A673 (cell line): ENCODE measurements at regions of chr13 and their contacts with region 1.

Region 1: DNA sequence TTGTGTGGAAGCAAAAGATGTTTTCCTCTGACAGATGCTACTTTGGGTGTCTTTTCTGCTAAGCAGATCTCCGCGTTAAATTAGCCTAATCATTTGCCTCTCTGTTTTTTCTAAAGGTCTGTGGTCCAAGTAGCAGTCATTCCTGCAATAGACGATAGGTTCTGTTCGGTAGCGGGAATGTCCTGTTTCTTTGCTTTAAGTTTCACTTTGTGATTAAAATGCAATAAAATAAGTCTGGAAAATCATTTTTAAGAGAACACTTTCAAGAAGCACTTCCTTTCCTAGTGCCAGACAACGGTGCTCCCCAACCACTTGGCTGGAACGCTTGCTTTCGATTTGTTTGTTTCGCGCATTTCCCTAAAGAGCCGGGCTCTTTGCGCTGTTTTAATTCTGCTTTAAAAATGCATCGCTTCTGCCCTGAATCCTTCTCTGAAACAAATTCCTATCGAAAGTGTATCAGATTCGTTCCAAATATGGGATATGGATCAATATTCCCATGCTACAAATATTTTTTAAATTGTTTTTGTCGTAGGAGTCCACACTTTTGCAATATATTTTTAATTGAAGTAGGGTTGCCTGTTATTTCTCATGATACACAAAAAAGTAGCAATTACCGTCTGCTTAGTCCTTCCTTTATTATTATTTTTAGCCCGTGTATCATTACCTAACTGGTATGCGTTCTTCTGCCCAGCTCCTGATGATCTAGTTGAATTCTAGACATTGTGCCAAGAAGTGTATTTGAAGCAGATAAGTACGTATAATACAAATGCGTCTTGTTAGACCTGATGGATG is 14.2 kb downstream of the ZIC2 start:
- DNase-seq: peak; percentile 83
- H3K4me3 ChIP-seq: peak overlapping the region; percentile 48
- H3K27ac ChIP-seq: peak overlapping the region; percentile 96
- H3K4me1 ChIP-seq: peaks cover 51% of the 10 kb centered on the region
- H3K27me3 ChIP-seq: no peaks in the 10 kb centered on the region
- CTCF ChIP-seq: no peak

Region 2: DNA sequence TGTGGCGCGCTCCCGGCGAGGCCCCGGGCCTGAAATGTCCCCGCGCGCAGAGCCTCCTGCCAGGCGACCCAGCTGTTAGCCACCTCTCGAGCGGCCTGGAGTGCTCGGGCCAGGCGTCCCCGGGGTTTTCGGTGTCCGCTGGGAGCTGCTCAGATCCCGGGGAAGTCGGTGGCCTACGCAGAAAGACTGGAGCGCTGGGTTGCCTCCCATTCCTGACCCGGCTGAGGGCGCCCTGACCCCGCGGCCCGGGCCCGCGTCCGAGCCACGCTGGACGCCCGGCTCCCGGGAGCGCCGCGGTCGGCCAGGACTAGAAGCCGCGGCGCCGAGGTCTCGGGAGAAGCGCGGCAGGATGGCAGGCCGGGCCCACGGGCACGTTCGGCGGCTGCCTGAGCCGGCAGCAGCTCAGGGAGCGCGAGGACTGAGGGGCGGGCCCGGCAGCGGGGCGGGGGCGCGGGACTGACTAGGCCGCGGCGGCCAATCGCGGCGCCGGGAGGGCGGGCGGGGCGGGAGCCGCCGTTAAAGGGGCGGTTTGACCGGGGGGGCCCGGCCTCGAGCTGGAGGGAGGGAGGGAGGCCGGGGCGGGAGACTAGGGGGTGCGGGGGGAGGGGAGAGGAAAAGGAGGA is 15.5 kb before region 1 on chr13:
- CTCF ChIA-PET with region 1: no interaction called
- POLR2A ChIA-PET with region 1: interaction called, 12 read pairs
- intact Hi-C with region 1: no loop called
- DNase-seq: peak; percentile 96
- H3K4me3 ChIP-seq: peak overlapping the region; percentile 95
- H3K27ac ChIP-seq: peak overlapping the region; percentile 97
- H3K4me1 ChIP-seq: peaks cover 5% of the 10 kb centered on the region
- H3K27me3 ChIP-seq: no peaks in the 10 kb centered on the region
- CTCF ChIP-seq: no peak

Region 3: DNA sequence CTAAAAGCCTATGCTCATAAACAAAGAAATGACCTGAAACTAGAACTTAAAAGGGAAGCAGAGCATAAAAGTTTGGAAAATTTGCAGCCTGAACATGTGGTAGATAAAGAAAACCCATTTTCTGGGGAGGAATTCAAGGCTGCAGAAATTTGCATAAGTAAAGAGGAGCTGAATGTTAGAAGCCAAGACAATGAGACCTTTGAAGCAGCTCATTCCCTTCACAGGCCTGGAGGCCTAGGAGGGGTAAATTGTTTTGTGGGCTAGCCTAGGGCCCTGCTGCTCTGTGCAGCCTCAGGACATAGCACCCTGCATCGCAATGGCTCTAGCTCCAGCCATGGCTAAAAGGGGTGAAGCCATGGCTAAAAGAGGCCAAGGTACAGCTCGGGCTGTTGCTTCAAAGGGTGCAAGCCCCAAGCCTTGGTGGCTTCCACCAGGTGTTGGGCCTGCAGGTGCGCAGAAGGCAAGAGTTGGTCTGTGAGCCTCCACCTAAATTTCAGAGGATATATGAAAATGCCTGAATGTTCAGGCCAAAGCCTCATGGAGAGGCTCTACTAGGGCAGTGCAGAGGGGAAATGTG is 24.1 kb after region 1 on chr13:
- CTCF ChIA-PET with region 1: interaction called, 11 read pairs
- POLR2A ChIA-PET with region 1: no interaction called
- intact Hi-C with region 1: no loop called
- DNase-seq: no peak
- H3K4me3 ChIP-seq: no peak overlapping the region
- H3K27ac ChIP-seq: no peak overlapping the region
- H3K4me1 ChIP-seq: no peaks in the 10 kb centered on the region
- H3K27me3 ChIP-seq: no peaks in the 10 kb centered on the region
- CTCF ChIP-seq: no peak

Region 4: GRCh38 chr13:100088644-100089464 is 93.1 kb after region 1 on chr13 and contains the start of gene PCCA:
- CTCF ChIA-PET with region 1: no interaction called
- POLR2A ChIA-PET with region 1: no interaction called
- intact Hi-C with region 1: loop called (anchors 10 kb)
- DNase-seq: peak; percentile 92
- H3K4me3 ChIP-seq: peak within 1 kb of the TSS; percentile 83
- H3K27ac ChIP-seq: peak within 1 kb of the TSS; percentile 56
- H3K4me1 ChIP-seq: no peaks in the 10 kb centered on the region
- H3K27me3 ChIP-seq: no peaks in the 10 kb centered on the region
- CTCF ChIP-seq: no peak
- total RNA-seq, gene PCCA: 93.0 and 105 TPM in 2 replicates

Region 5: GRCh38 chr13:100108913-100109507 is 113.2 kb after region 1 on chr13:
- CTCF ChIA-PET with region 1: no interaction called
- POLR2A ChIA-PET with region 1: no interaction called
- intact Hi-C with region 1: no loop called
- DNase-seq: no peak
- H3K4me3 ChIP-seq: no peak overlapping the region
- H3K27ac ChIP-seq: no peak overlapping the region
- H3K4me1 ChIP-seq: no peaks in the 10 kb centered on the region
- H3K27me3 ChIP-seq: no peaks in the 10 kb centered on the region
- CTCF ChIP-seq: no peak

Region 6: DNA sequence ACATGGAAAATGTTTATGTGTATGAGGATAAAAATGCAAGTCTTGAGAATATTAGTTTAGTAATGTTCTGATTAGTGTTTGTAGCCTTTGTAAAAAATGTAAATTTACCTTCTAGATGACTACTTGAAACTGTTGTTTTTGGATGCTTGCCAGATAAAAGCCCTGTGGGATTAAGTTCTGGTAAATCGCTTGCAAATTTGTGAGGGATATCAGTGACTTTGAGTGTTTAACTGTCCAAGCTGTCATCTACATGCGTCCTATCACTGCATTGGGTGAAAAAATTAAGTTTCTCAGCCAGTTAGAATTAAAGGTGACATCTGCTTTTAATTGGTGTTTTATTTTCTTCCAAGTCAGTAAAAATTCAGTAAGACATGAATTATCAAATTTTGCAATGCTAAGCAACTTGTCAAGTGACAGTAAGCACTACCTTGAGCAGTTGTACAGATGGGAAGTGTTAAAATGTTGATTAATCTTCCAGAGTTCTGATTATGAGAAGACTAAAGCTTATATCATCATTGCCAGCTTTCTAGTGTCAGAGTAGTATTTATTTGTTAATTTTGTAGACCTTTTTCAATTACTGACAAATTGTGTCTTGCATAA is 181.1 kb after region 1 on chr13:
- CTCF ChIA-PET with region 1: no interaction called
- POLR2A ChIA-PET with region 1: no interaction called
- intact Hi-C with region 1: no loop called
- DNase-seq: peak; percentile 79
- H3K4me3 ChIP-seq: no peak overlapping the region
- H3K27ac ChIP-seq: no peak overlapping the region
- H3K4me1 ChIP-seq: peaks cover 33% of the 10 kb centered on the region
- H3K27me3 ChIP-seq: no peaks in the 10 kb centered on the region
- CTCF ChIP-seq: no peak

Region 7: DNA sequence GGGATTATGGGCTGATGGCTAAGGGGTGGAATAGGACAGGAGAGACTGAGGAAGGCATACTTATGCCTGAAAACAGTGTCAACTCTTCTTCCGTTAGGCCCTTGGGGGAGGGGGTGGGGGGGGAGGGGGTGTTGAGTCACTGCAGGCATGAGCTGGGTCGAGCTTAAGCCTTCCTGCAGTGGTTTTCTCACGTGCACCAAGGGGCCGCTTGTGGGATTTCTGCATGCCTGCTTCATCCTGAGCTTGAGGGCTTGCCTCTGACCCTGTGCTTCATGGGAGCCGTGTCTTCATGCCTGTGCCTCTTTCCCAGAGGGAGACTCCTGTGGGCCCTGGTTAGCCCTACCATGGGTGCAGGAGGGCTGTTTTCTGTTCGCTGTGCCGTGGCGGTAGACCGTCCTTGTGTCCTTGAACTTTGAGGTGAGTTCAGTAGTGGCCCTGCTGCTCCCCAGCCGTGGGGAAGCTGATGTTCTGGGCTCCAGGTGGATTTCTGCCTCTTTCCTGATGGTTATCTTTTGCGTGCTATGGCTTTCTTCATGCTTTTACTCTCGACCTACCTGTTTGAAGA is 279.2 kb after region 1 on chr13:
- CTCF ChIA-PET with region 1: no interaction called
- POLR2A ChIA-PET with region 1: no interaction called
- intact Hi-C with region 1: no loop called
- DNase-seq: no peak
- H3K4me3 ChIP-seq: no peak overlapping the region
- H3K27ac ChIP-seq: no peak overlapping the region
- H3K4me1 ChIP-seq: peaks cover 2% of the 10 kb centered on the region
- H3K27me3 ChIP-seq: no peaks in the 10 kb centered on the region
- CTCF ChIP-seq: no peak